ENCODE measurements at regions of chr21 and their contacts with region 1.

Region 1: DNA sequence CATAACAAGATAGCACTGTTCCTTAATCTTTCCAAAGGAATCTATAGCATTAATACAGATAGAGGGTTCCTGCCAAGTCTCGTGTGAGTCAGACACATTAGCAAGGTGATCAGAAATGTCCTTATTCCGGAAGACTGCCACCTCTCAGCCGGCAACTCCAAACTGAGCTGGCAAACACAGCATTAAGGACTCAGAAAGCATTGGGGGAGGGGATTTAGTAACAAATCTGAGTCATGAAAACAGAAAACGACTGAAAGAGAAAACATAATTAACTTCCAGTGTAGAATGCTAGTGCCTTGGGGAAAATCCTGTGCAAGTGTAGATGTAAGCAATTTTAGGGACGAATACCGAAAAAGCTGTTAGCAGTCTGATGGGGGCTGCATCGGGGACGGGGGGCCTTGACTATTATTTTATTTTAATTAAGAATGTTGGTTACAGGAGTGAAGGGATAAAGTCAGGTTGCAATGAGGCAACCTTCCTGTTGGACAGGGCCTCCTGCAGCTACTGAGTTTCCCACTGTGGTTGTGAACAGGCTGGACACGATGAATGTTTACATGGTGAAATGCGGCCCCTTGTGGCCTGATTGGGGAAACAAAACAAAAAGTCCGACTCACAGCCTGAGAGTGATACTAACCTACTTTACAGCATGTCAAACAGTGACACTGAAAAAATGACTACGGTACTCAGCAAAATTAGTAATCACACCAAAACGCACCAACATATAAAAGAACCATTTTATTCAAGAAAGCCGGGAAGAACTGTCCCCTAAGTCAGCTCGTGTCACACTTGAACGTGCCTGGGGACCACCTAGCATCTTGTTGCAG is 20.7 kb downstream of the MIS18A start:
- DNase-seq: no peak

Region 2: DNA sequence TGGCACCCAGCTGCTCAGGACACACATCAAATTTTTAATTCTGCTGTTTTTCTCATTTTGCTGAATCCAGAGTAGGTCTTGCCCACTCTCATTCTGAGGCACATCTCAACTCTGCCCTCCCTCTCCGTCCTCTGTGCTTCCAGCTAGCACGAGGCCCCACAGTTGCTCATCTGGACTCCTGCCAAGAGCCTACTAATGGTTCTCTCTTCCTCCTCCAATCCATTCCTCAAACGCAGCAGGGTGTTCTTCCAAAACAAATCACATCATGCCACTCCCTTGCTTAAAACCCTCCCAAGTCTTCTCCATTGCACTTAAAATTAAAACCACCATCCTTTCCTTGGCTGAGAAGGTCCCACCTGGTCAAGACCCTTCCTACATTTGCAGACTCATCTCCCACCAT is 476.4 kb before region 1 on chr21:
- intact Hi-C with region 1: loop called (anchors 2 kb)
- DNase-seq: no peak

Region 3: DNA sequence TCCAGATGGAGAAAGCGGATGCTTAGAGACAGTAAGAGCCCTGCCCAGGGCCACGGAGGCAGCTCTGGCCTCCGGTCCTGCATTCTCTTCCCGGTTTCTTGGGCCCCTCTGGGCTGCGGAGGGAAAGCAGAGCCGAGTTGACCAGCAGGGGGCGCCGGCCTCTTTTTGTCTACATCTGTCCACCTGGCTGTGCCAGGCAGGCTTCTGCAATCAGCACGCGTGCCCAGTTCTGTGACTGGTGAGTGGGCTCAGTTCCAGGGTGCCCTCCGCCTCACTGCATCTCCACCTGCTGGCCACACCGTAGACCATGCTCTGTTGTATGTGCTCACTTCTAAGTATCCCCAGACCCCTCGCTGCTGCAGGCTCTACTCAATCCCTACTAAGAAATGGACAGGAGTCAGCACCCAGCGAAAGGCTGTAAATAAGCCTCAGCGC is 392.1 kb before region 1 on chr21:
- intact Hi-C with region 1: loop called (anchors 1 kb)
- DNase-seq: peak; percentile 90

Region 4: DNA sequence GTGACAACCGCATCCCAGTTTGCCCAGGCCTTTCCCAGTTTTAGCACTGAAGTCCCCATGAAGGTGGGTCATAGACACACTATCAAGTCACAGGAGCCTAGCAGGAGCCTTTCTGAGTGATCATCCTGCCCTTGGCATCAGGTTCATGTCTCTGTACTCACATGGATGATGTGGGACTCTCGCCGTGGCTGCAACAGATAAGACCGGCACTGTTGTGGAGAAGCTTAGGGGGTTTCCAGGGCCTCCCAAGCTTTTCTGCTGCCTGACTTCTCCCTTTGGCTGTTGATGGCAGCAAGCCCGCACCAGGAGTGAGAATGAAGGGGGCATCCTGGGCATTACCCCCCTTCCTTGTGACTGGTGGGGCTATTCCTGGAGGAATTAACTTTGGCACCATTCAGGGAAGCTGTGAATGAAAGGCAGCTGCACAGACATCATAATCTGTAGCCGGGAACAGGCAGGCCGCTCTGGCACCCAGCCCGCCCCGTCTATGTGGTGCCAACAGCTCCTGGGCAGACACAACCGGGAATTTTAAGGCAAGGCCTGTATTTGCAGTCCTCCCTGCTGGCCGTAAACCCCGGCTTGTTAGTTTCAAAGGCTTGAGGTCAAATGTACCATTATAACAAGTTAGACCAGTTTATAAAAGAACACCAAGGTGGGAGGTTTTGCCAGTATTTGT is 236.7 kb before region 1 on chr21:
- intact Hi-C with region 1: loop called (anchors 1 kb)
- DNase-seq: peak; percentile 83

Region 5: GRCh38 chr21:32034850-32035249 is 223.3 kb before region 1 on chr21:
- intact Hi-C with region 1: no loop called
- DNase-seq: no peak

Region 6: DNA sequence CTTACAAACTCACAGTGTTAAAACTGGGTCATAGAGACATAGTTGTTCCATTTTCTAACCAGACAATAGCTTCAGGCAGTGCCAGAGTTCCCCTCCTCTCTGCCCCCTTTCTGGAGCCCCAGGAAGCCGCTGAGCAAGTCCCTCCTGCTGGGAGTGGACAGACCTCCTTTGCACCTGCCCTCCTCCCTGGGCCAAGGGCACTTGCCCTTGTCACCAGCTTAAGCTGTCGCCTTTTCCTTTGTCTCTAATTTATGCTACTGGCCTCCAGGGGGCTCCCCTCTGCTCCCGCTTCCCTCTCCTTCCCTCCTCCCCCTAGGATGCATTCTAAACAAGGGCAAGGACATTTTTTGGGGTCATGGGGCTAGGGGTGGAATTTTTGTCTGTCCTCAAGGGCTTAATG is 161.8 kb before region 1 on chr21:
- intact Hi-C with region 1: loop called (anchors 5 kb)
- DNase-seq: no peak

Region 7: GRCh38 chr21:32135401-32136363 is 122.5 kb before region 1 on chr21:
- intact Hi-C with region 1: loop called (anchors 5 kb)
- DNase-seq: no peak

Region 8: DNA sequence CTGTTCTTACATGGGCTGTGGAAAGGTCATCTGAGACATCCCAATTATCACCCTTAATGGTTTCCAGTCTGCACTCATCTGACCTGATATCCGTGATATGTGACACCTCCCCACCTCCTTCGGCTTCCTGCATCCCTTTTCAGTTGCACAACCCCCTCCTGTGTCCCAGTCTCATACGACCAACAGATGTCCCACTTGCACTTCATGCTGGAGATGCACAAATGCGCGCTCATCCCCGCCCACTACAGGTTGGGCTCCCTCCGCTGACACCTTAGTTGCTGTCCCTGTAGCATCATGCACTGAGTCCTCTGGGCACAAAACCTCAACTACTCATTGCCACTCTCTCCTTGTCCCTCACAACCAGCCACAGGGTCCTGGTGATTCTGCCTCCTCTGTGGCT is 73.7 kb before region 1 on chr21:
- intact Hi-C with region 1: loop called (anchors 5 kb)
- DNase-seq: no peak

Region 9: GRCh38 chr21:32674731-32675130 is 416.6 kb after region 1 on chr21:
- intact Hi-C with region 1: no loop called
- DNase-seq: no peak

Measured in cardiac septum (tissue), 1 donor.